ENCODE measurements at regions of chr4 and their contacts with region 1.

Region 1: DNA sequence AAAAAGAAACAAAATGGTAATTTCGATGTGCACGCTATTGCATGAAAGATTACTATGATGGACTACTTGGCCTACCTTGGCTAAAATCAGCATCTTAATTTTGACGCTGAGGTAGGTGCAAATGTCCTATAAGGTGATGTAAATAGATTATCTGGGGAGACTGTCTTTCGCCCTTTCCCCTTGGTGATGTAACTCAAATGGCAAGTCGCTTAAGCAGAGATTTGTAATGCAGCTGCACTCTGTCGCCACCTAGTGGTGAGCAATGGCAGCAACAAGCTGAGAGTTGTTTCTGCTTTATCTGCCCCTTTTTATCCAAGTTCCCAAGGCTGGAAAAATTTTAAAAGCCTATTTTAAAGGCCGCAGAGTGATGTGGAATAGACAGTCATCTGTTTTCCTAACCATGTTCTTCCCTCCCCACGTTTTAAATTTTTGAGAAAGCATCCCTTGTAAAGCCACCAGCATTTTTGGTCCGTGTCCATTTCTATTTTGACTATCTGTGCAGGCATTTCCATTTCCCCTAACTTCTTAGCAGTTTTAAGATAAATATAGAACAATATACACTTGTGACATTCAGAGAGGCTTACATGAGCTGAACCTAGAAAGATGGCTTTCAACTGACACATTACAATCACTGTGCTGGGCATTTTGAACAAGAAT is 62.4 kb upstream of the PDLIM3 start:
- DNase-seq: peak in 1 of 2 experiments; percentile 81
- H3K4me3 ChIP-seq: no peak overlapping the region
- H3K27ac ChIP-seq: no peak overlapping the region
- H3K4me1 ChIP-seq: peaks cover 0 to 2% (median 0%) of the 10 kb centered on the region in 4 experiments; a peak in 1 of 7 replicates
- H3K27me3 ChIP-seq: no peaks in the 10 kb centered on the region
- CTCF ChIP-seq: peak; percentile 74 to 97 (median 85)
- EP300 ChIP-seq: no peak
- POLR2A ChIP-seq: no peak
- RAD21 ChIP-seq: peak; percentile 94 to 95

Region 2: DNA sequence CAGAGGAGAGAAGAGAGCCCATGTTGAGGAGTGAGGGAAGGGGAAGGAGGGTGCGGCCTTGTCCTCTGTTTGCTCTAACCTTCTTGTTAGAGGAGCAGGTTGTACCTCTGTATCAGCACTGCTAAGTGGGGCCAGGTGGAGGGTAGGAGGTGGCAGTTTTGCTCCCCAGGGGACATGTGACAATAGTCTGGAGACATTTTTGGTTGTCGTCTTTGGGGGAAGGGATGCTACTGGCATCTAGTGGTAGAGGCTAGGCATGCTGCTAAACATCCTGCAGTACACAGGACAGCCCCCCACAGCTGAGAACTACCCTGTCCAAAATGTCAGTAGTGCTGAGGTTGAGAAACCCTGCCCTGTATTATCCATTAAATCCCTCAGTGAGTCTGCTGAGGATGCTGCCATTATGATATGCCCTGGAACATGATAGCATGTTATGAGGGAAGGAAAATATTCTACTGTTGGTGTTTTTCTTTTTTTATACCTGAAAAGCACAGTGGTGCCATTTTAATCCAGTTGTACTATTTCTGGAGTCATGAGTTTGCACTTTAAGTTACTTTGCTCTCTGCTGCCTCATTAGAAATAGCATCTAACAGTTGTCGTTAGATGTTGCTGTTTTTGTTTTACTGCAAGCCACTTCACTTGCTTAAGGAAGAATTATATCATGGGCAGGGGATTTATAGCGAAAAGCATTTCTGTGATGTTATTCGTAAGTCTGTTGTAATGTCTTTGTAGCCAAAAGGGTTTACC is 292.5 kb before region 1 on chr4:
- CTCF ChIA-PET with region 1: no interaction called
- POLR2A ChIA-PET with region 1: no interaction called
- DNase-seq: peak; percentile 25 to 57
- H3K4me3 ChIP-seq: no peak overlapping the region
- H3K27ac ChIP-seq: no peak overlapping the region; the same call in 1 of the 2 replicates
- H3K4me1 ChIP-seq: peaks cover 12 to 27% (median 20%) of the 10 kb centered on the region in 4 experiments
- H3K27me3 ChIP-seq: no peaks in the 10 kb centered on the region
- CTCF ChIP-seq: peak; percentile 61 to 76 (median 69)
- EP300 ChIP-seq: no peak
- POLR2A ChIP-seq: no peak
- RAD21 ChIP-seq: peak; percentile 82 to 86

Region 3: DNA sequence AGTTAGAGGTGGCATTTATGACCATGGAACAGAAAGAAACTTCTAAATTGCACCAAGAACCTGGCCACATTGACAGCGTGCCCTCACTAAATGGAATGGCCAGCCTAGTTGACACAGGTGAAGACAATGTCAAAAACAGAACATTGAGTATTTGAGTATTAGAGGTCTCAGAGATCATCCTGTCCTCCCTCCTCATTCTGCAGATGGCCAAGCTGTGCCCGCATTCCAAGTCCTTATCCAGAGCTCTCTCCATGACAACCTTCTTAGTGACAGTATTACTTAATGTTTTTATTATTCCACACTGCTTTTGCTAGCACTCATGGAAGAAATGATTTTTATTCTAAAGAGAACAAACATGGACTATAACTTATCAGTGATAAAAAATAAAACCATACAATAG is 116.3 kb before region 1 on chr4:
- CTCF ChIA-PET with region 1: interaction called, 11 read pairs
- POLR2A ChIA-PET with region 1: no interaction called
- DNase-seq: no peak
- H3K4me3 ChIP-seq: no peak overlapping the region
- H3K27ac ChIP-seq: no peak overlapping the region
- H3K4me1 ChIP-seq: peaks cover 0 to 8% (median 5%) of the 10 kb centered on the region in 4 experiments; a peak in 3 of 7 replicates
- H3K27me3 ChIP-seq: peaks cover 12 to 43% (median 29%) of the 10 kb centered on the region in 4 experiments
- CTCF ChIP-seq: no peak
- EP300 ChIP-seq: no peak
- POLR2A ChIP-seq: no peak
- RAD21 ChIP-seq: no peak

Region 4: GRCh38 chr4:185514182-185514697 is 83.4 kb before region 1 on chr4:
- CTCF ChIA-PET with region 1: interaction called, 12 read pairs
- POLR2A ChIA-PET with region 1: no interaction called
- DNase-seq: no peak
- H3K4me3 ChIP-seq: no peak overlapping the region
- H3K27ac ChIP-seq: no peak overlapping the region
- H3K4me1 ChIP-seq: no peaks in the 10 kb centered on the region
- H3K27me3 ChIP-seq: no peaks in the 10 kb centered on the region
- CTCF ChIP-seq: no peak
- EP300 ChIP-seq: no peak
- POLR2A ChIP-seq: no peak
- RAD21 ChIP-seq: no peak

Region 5: GRCh38 chr4:185587427-185588161 is 10.1 kb before region 1 on chr4:
- CTCF ChIA-PET with region 1: interaction called, 27 read pairs
- POLR2A ChIA-PET with region 1: no interaction called
- DNase-seq: peak in 1 of 2 experiments; percentile 77
- H3K4me3 ChIP-seq: peak overlapping the region in 3 of 4 experiments; percentile 18 to 53 (median 29); a peak in 5 of 8 replicates
- H3K27ac ChIP-seq: peak overlapping the region; percentile 13; the same call in 1 of the 2 replicates
- H3K4me1 ChIP-seq: peaks cover 4 to 18% (median 10%) of the 10 kb centered on the region in 4 experiments
- H3K27me3 ChIP-seq: peaks cover 0 to 3% (median 1%) of the 10 kb centered on the region in 4 experiments; a peak in 2 of 7 replicates
- CTCF ChIP-seq: no peak
- EP300 ChIP-seq: no peak
- POLR2A ChIP-seq: no peak
- RAD21 ChIP-seq: no peak

Region 6: DNA sequence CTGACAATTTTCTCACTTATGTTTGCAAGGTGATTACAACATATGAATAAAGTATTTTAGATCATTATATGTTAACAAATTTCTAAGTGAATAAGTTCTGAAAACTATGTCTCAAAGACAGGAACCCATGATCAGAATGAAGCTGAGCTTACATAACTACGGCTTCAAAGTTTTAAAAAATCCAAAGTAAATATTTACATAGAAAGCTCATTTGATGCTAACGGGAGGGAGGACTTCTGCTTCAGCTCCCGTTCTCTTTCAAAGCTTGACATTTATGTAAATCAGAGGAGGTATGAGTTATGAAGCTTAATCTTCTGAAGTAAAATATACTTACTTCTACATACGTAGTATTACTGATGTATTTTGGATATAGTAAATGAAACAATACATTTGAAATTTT is 10.5 kb after region 1 on chr4:
- CTCF ChIA-PET with region 1: interaction called, 14 read pairs
- POLR2A ChIA-PET with region 1: no interaction called
- DNase-seq: no peak
- H3K4me3 ChIP-seq: no peak overlapping the region
- H3K27ac ChIP-seq: no peak overlapping the region
- H3K4me1 ChIP-seq: no peaks in the 10 kb centered on the region
- H3K27me3 ChIP-seq: no peaks in the 10 kb centered on the region
- CTCF ChIP-seq: no peak
- EP300 ChIP-seq: no peak
- POLR2A ChIP-seq: no peak
- RAD21 ChIP-seq: no peak

Region 7: GRCh38 chr4:185625503-185625902 is 27.8 kb after region 1 on chr4:
- CTCF ChIA-PET with region 1: interaction called, 20 read pairs
- POLR2A ChIA-PET with region 1: no interaction called
- DNase-seq: no peak
- H3K4me3 ChIP-seq: no peak overlapping the region
- H3K27ac ChIP-seq: no peak overlapping the region
- H3K4me1 ChIP-seq: no peaks in the 10 kb centered on the region
- H3K27me3 ChIP-seq: no peaks in the 10 kb centered on the region
- CTCF ChIP-seq: no peak
- EP300 ChIP-seq: no peak
- POLR2A ChIP-seq: no peak
- RAD21 ChIP-seq: no peak

Region 8: DNA sequence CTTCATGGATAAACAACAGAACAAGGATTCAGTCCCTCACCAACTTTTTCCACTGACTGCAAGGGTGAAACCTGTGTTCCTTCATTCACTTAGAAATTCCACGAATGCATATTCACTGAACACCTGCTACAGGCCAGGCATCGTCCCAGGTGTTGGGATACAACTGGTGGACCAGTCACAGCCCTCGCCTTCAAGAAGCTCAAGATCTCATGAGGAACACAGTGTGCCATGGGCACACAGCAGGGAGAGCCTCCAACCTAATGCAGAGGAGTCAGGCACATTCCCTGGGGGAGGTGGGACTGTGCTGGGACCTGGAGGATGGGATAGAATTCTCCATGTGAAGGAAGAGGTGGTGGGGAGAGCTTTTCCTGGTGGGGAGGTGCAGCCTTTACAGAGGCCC is 45.2 kb after region 1 on chr4:
- CTCF ChIA-PET with region 1: no interaction called
- POLR2A ChIA-PET with region 1: no interaction called
- DNase-seq: no peak
- H3K4me3 ChIP-seq: no peak overlapping the region
- H3K27ac ChIP-seq: no peak overlapping the region
- H3K4me1 ChIP-seq: peaks cover 0 to 16% (median 6%) of the 10 kb centered on the region in 4 experiments; a peak in 4 of 7 replicates
- H3K27me3 ChIP-seq: no peaks in the 10 kb centered on the region
- CTCF ChIP-seq: no peak
- EP300 ChIP-seq: no peak
- POLR2A ChIP-seq: no peak
- RAD21 ChIP-seq: no peak

Region 9: DNA sequence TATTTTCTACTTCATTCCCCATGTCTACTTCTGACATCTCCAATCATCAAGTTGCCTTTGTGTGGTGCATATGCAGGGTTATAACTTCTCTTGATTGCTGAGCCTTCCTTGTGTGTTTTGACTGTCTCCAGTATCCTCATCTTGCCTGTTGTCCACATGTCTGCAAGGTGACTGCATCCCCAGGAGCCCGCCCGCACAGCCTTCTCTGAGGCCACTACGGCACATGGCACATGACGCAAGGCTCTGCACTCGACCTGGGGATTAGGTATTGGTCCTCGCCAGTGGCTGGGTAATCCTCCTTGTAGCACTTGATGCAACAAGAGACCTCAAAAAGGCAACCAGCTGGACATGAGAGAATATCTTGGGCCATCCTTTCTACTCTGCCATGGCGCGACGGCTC is 91.7 kb after region 1 on chr4:
- CTCF ChIA-PET with region 1: no interaction called
- POLR2A ChIA-PET with region 1: no interaction called
- DNase-seq: no peak
- H3K4me3 ChIP-seq: no peak overlapping the region
- H3K27ac ChIP-seq: no peak overlapping the region
- H3K4me1 ChIP-seq: peaks cover 0 to 2% (median 0%) of the 10 kb centered on the region in 4 experiments; a peak in 1 of 7 replicates
- H3K27me3 ChIP-seq: no peaks in the 10 kb centered on the region
- CTCF ChIP-seq: no peak
- EP300 ChIP-seq: no peak
- POLR2A ChIP-seq: no peak
- RAD21 ChIP-seq: no peak

Region 10: GRCh38 chr4:186021461-186022167 is 424.0 kb after region 1 on chr4:
- CTCF ChIA-PET with region 1: interaction called, 10 read pairs
- POLR2A ChIA-PET with region 1: no interaction called
- DNase-seq: peak in 1 of 2 experiments; percentile 77
- H3K4me3 ChIP-seq: no peak overlapping the region
- H3K27ac ChIP-seq: no peak overlapping the region
- H3K4me1 ChIP-seq: peaks cover 0 to 9% (median 3%) of the 10 kb centered on the region in 4 experiments; a peak in 4 of 7 replicates
- H3K27me3 ChIP-seq: peaks cover 0 to 2% (median 0%) of the 10 kb centered on the region in 4 experiments; a peak in 1 of 7 replicates
- CTCF ChIP-seq: peak; percentile 56 to 92 (median 89)
- EP300 ChIP-seq: no peak
- POLR2A ChIP-seq: no peak
- RAD21 ChIP-seq: peak; percentile 99 to 100

Measured in H1 (cell line).